GM12878 (cell line): ENCODE measurements at regions of chr16 and their contacts with region 1.

Region 1: DNA sequence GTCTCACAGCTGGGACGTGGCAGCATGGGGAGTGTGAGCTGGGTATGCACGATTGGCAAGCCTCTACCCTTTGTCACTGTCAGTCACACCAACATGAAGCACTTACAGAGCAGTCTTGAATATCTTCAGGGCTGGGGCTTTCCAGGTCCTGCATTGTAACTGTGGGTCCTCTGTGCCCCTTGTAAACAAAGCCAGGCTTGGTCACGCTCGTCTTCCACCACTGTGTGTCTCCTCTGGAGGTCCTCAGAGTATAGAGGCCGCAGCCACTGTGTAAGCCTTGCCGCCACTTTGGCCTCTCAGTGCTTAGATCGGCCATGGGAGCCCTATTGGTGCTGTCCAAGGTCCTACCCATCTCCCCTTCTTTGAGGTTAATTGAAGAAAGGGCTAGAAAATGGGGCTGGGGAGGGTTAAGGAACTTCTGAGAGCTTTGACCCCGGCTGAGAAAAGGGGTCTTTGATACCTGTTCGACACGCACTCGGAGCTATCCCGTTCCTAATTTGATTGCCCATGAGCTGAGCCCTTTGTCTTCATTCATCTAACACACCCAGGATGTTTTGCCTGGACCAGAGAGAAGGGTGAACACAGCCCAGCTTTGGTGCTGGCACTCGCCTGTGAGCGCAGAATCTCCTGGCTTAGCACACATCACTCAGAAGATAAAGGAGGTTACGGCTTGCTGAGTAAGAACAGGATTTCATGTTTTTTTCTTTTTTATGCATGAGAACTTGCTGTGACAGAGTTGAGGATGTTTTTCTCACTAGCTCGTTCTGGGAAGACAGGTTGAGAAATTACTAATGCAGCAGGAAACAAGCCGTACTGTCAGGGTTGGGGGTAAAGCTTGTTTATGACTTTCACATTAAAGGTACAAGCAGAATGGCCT is 267.9 kb downstream of the CPPED1 start:
- DNase-seq: peak; percentile 97
- ATAC-seq: peak; percentile 79
- H3K4me3 ChIP-seq: 0 out of 2 replicates have a peak overlapping the region, but pooled peaks have one; percentile 14
- H3K27ac ChIP-seq: peak overlapping the region; percentile 77
- H3K4me1 ChIP-seq: peaks cover 57% of the 10 kb centered on the region
- H3K27me3 ChIP-seq: no peaks in the 10 kb centered on the region
- CTCF ChIP-seq: peak in 2 of 3 experiments; percentile 24 to 49; a peak in 3 of 6 replicates
- EP300 ChIP-seq: peak; percentile 79 to 83
- POLR2A ChIP-seq: peak; percentile 68
- RAD21 ChIP-seq: peak; percentile 48

Region 2: GRCh38 chr16:12455287-12455798 is 80.4 kb before region 1 on chr16:
- CTCF ChIA-PET with region 1: interaction called, 7 read pairs
- POLR2A ChIA-PET with region 1: interaction called, 5 read pairs
- RAD21 ChIA-PET with region 1: interaction called, 8 read pairs
- SMC1A ChIA-PET with region 1: interaction called, 19 read pairs
- in situ Hi-C with region 1: no loop called
- intact Hi-C with region 1: loop called (anchors 5 kb)
- DNase-seq: no peak
- ATAC-seq: peak; percentile 90
- H3K4me3 ChIP-seq: no peak overlapping the region
- H3K27ac ChIP-seq: no peak overlapping the region
- H3K4me1 ChIP-seq: peaks cover 14% of the 10 kb centered on the region
- H3K27me3 ChIP-seq: no peaks in the 10 kb centered on the region
- CTCF ChIP-seq: peak; percentile 72 to 88 (median 83)
- EP300 ChIP-seq: no peak
- POLR2A ChIP-seq: no peak
- RAD21 ChIP-seq: peak; percentile 75

Region 3: DNA sequence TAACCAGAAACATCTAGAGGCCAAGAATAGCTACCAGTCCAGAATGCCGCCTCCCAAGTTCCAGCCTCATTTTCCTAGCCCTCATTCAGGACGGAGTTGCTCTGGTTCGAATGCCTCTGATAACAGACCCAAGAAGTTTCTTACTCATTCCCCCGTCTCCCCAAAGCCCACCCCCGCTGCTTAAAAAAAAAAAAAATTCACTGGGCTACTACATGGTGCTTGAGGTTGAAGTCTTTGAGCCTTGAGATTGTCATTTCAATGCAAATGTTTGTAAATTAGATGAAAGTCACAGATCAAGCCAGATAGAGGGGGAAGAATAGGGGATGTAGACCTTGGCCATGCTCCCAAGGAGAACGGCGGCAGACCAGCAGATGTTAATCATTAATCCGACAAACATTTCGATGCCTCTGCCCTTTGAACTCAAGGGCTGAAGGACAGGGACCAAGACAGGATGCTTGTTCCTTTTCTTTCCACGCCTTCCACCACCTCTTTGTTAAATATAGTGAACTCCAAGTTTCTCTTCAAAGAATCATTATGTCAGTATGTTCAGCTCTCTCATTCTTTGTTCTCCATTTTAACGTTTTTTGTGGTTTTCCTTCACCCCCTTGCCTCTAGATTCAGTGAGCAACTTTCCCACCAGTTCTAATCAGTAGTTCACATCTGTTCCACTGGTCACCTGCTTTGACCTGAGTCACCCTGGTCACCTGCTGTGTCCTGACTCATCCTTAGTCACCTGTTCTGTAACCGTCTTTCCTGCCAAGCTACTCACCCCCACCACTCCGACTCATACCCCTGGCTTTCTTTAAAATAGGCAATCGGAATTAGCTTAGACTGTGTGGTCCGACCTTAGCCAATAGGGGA is 77.6 kb after region 1 on chr16:
- CTCF ChIA-PET with region 1: no interaction called
- POLR2A ChIA-PET with region 1: no interaction called
- RAD21 ChIA-PET with region 1: interaction called, 11 read pairs
- SMC1A ChIA-PET with region 1: interaction called, 10 read pairs
- in situ Hi-C with region 1: no loop called
- intact Hi-C with region 1: loop called (anchors 5 kb)
- DNase-seq: peak; percentile 76
- ATAC-seq: peak; percentile 88
- H3K4me3 ChIP-seq: no peak overlapping the region
- H3K27ac ChIP-seq: no peak overlapping the region
- H3K4me1 ChIP-seq: peaks cover 17% of the 10 kb centered on the region
- H3K27me3 ChIP-seq: no peaks in the 10 kb centered on the region
- CTCF ChIP-seq: no peak
- EP300 ChIP-seq: peak; percentile 64 to 90; a peak in 3 of 4 replicates
- POLR2A ChIP-seq: no peak
- RAD21 ChIP-seq: no peak

Region 4: GRCh38 chr16:12754824-12755543 is 219.2 kb after region 1 on chr16:
- CTCF ChIA-PET with region 1: interaction called, 7 read pairs
- POLR2A ChIA-PET with region 1: no interaction called
- RAD21 ChIA-PET with region 1: interaction called, 8 read pairs
- SMC1A ChIA-PET with region 1: interaction called, 7 read pairs
- in situ Hi-C with region 1: no loop called
- intact Hi-C with region 1: loop called (anchors 2 kb)
- DNase-seq: no peak
- ATAC-seq: no peak
- H3K4me3 ChIP-seq: no peak overlapping the region
- H3K27ac ChIP-seq: no peak overlapping the region
- H3K4me1 ChIP-seq: peaks cover 14% of the 10 kb centered on the region
- H3K27me3 ChIP-seq: no peaks in the 10 kb centered on the region
- CTCF ChIP-seq: no peak
- EP300 ChIP-seq: no peak
- POLR2A ChIP-seq: no peak
- RAD21 ChIP-seq: no peak

Region 5: DNA sequence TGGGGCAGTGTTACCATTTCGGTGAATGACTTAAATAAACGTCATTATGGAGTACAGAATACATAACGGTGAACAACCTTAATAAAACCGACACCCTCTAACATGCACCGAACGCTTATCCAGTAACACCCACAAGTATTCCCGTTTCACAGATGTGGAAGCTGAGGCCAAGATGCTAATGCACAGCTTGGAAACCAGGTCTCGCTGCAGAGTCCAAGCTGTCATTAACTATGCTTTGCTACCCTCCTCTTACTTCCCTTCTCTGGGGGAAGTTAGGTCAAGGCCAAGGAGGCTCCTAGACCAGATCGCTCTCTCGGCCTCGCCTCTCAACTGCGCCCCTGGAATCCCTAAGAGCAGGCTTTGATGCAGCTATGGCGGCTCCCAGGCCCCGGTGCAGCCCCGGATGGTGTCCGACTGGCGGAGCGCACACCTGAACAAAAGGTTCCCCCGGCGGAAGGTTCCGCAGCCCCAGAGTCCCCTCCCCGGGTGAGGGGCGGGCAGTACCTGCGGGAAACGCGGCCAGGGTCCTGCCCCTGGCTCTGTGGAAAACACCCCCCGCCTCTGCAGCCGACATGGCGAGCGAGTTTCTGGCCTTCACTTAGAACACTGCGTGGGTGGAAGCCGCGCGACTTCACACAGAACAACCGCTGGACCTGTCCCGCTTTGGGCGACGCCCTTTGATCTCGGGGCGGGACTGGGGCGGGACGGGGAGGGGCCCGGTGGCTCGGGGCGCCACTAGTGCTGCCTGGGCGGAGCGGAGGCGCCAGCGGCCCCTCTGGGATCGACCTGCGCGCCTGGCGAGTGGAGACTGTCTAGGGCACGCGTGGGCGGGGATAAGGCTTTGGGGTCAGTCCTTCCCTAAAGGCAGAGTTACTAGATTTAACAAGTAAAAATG is 267.7 kb after region 1 on chr16 and contains the start of gene CPPED1:
- CTCF ChIA-PET with region 1: no interaction called
- POLR2A ChIA-PET with region 1: no interaction called
- RAD21 ChIA-PET with region 1: interaction called, 15 read pairs
- SMC1A ChIA-PET with region 1: interaction called, 6 read pairs
- in situ Hi-C with region 1: loop called (anchors 5 kb)
- intact Hi-C with region 1: loop called (anchors 2 kb)
- DNase-seq: peak; percentile 72
- ATAC-seq: peak; percentile 89
- H3K4me3 ChIP-seq: peak within 1 kb of the TSS; percentile 88
- H3K27ac ChIP-seq: peak within 1 kb of the TSS; percentile 81
- H3K4me1 ChIP-seq: peaks cover 22% of the 10 kb centered on the region
- H3K27me3 ChIP-seq: no peaks in the 10 kb centered on the region
- CTCF ChIP-seq: no peak; a peak in 1 of 6 replicates
- EP300 ChIP-seq: peak in 1 of 2 experiments; percentile 24; a peak in 1 of 4 replicates
- POLR2A ChIP-seq: peak; percentile 97
- RAD21 ChIP-seq: no peak
- polyA plus RNA-seq, gene CPPED1: 11.4 to 12.3 TPM

Region 6: GRCh38 chr16:12819126-12820117 is 283.6 kb after region 1 on chr16:
- CTCF ChIA-PET with region 1: interaction called, 7 read pairs
- POLR2A ChIA-PET with region 1: no interaction called
- RAD21 ChIA-PET with region 1: no interaction called
- SMC1A ChIA-PET with region 1: no interaction called
- in situ Hi-C with region 1: no loop called
- intact Hi-C with region 1: loop called (anchors 5 kb)
- DNase-seq: peak; percentile 24
- ATAC-seq: peak; percentile 85
- H3K4me3 ChIP-seq: no peak overlapping the region
- H3K27ac ChIP-seq: no peak overlapping the region
- H3K4me1 ChIP-seq: no peaks in the 10 kb centered on the region
- H3K27me3 ChIP-seq: no peaks in the 10 kb centered on the region
- CTCF ChIP-seq: peak; percentile 58 to 85 (median 76)
- EP300 ChIP-seq: no peak
- POLR2A ChIP-seq: no peak
- RAD21 ChIP-seq: peak; percentile 95

Region 7: GRCh38 chr16:12874186-12874585 is 338.4 kb after region 1 on chr16:
- CTCF ChIA-PET with region 1: no interaction called
- POLR2A ChIA-PET with region 1: no interaction called
- RAD21 ChIA-PET with region 1: no interaction called
- SMC1A ChIA-PET with region 1: no interaction called
- in situ Hi-C with region 1: no loop called
- intact Hi-C with region 1: no loop called
- DNase-seq: no peak
- ATAC-seq: no peak
- H3K4me3 ChIP-seq: no peak overlapping the region
- H3K27ac ChIP-seq: no peak overlapping the region
- H3K4me1 ChIP-seq: no peaks in the 10 kb centered on the region
- H3K27me3 ChIP-seq: no peaks in the 10 kb centered on the region
- CTCF ChIP-seq: no peak
- EP300 ChIP-seq: no peak
- POLR2A ChIP-seq: no peak
- RAD21 ChIP-seq: no peak